ENCODE measurements at regions of chr5 and their contacts with region 1.

Region 1: GRCh38 chr5:73437101-73437776 is 11.3 kb downstream of the FOXD1 start:
- DNase-seq: peak; percentile 80
- ATAC-seq: peak; percentile 84
- H3K4me3 ChIP-seq: peak overlapping the region; percentile 68
- H3K27ac ChIP-seq: peak overlapping the region; percentile 72
- H3K4me1 ChIP-seq: peaks cover 16% of the 10 kb centered on the region; the same call in 1 of the 2 replicates
- H3K27me3 ChIP-seq: no peaks in the 10 kb centered on the region
- CTCF ChIP-seq: peak; percentile 72

Region 2: GRCh38 chr5:73215891-73216610 is 221.2 kb before region 1 on chr5:
- CTCF ChIA-PET with region 1: no interaction called
- POLR2A ChIA-PET with region 1: no interaction called
- intact Hi-C with region 1: loop called (anchors 5 kb)
- DNase-seq: peak; percentile 77
- ATAC-seq: peak; percentile 94
- H3K4me3 ChIP-seq: peak overlapping the region; percentile 68
- H3K27ac ChIP-seq: peak overlapping the region; percentile 68
- H3K4me1 ChIP-seq: no peaks in the 10 kb centered on the region
- H3K27me3 ChIP-seq: no peaks in the 10 kb centered on the region
- CTCF ChIP-seq: peak; percentile 70

Region 3: GRCh38 chr5:73298772-73299630 is 138.2 kb before region 1 on chr5:
- CTCF ChIA-PET with region 1: interaction called, 3 read pairs
- POLR2A ChIA-PET with region 1: no interaction called
- intact Hi-C with region 1: loop called (anchors 5 kb)
- DNase-seq: peak; percentile 52
- ATAC-seq: peak; percentile 88
- H3K4me3 ChIP-seq: peak overlapping the region; percentile 69
- H3K27ac ChIP-seq: no peak overlapping the region
- H3K4me1 ChIP-seq: peaks cover 12% of the 10 kb centered on the region
- H3K27me3 ChIP-seq: no peaks in the 10 kb centered on the region
- CTCF ChIP-seq: peak; percentile 44; the same call in 1 of the 2 replicates

Region 4: GRCh38 chr5:73338256-73339050 is 98.8 kb before region 1 on chr5:
- CTCF ChIA-PET with region 1: no interaction called
- POLR2A ChIA-PET with region 1: no interaction called
- intact Hi-C with region 1: loop called (anchors 10 kb)
- DNase-seq: peak; percentile 49
- ATAC-seq: peak; percentile 87
- H3K4me3 ChIP-seq: peak overlapping the region; percentile 59
- H3K27ac ChIP-seq: peak overlapping the region; percentile 65
- H3K4me1 ChIP-seq: peaks cover 20% of the 10 kb centered on the region
- H3K27me3 ChIP-seq: no peaks in the 10 kb centered on the region
- CTCF ChIP-seq: no peak

Region 5: DNA sequence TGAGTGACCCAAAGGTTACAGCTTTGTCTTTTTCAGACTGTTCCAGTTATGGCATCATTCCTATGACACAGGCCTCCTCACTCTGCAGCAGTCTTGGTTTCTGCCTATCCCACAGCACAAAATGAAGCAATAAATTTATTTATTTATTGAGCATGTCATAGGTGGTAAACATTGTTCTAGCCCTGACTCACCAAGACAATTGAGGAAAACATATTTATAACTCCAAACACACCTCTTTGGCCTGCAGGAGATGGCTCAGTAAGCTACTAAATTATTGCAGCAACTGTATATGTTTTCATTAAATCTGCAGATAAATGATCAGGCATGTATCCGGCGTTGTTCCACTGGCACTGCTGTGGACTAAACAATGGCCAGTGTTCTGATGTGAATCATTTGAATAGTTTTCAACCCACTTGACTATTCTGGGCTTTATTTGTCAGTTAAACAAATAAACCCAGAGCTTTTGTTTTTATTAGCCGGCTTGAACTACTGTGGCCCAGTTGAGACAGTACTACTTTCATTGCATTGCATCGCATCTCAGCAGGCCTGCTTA is 71.9 kb before region 1 on chr5:
- CTCF ChIA-PET with region 1: no interaction called
- POLR2A ChIA-PET with region 1: interaction called, 10 read pairs
- intact Hi-C with region 1: loop called (anchors 1 kb)
- DNase-seq: peak; percentile 88
- ATAC-seq: peak; percentile 86
- H3K4me3 ChIP-seq: no peak overlapping the region
- H3K27ac ChIP-seq: peak overlapping the region; percentile 96
- H3K4me1 ChIP-seq: peaks cover 41% of the 10 kb centered on the region
- H3K27me3 ChIP-seq: no peaks in the 10 kb centered on the region
- CTCF ChIP-seq: no peak

Region 6: GRCh38 chr5:73370640-73371583 is 66.3 kb before region 1 on chr5:
- CTCF ChIA-PET with region 1: no interaction called
- POLR2A ChIA-PET with region 1: no interaction called
- intact Hi-C with region 1: loop called (anchors 1 kb)
- DNase-seq: peak; percentile 95
- ATAC-seq: peak; percentile 86
- H3K4me3 ChIP-seq: peak overlapping the region; percentile 62
- H3K27ac ChIP-seq: peak overlapping the region; percentile 98
- H3K4me1 ChIP-seq: peaks cover 41% of the 10 kb centered on the region
- H3K27me3 ChIP-seq: no peaks in the 10 kb centered on the region
- CTCF ChIP-seq: no peak

Region 7: DNA sequence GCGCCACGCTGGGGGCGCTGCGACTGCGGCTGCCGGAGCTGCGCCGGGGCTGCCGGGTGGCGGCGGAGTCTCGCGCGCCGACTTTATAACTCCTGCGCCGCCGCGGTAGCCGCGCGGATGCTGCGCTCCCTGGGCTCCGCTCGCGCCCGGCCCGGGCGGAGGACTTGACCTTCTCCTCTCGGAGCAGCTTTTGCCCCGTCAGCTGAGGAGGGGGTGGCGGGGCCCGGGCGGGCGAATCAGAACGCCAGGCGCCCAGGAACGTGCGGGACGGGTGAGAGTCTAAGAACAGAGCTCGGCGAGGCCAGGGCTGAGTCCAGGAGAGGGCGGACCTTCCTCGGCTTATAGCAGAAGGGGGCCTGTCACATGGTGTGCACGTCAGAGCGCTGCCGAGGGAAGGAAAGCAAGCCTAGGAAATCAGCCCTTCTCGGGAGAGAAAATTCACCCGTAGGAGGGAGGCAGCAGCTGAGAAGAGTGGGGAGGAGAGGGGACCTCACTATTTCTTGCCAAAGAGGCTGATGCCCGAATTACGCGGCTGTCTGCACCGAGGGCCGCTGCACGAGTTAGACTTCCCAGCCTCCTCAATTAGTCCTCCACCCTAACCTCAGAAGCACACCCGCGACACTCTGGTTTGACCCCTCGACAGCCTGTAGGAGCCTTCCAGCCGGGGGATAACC is 11.4 kb after region 1 on chr5 and contains the start of gene FOXD1:
- CTCF ChIA-PET with region 1: no interaction called
- POLR2A ChIA-PET with region 1: no interaction called
- intact Hi-C with region 1: loop called (anchors 2 kb)
- DNase-seq: peak; percentile 83
- ATAC-seq: peak; percentile 83
- H3K4me3 ChIP-seq: peak within 1 kb of the TSS; percentile 78
- H3K27ac ChIP-seq: peak within 1 kb of the TSS; percentile 40
- H3K4me1 ChIP-seq: peaks cover 12% of the 10 kb centered on the region
- H3K27me3 ChIP-seq: no peaks in the 10 kb centered on the region
- CTCF ChIP-seq: no peak
- total RNA-seq, gene FOXD1: 10.3 and 12.8 TPM in 2 replicates

Region 8: DNA sequence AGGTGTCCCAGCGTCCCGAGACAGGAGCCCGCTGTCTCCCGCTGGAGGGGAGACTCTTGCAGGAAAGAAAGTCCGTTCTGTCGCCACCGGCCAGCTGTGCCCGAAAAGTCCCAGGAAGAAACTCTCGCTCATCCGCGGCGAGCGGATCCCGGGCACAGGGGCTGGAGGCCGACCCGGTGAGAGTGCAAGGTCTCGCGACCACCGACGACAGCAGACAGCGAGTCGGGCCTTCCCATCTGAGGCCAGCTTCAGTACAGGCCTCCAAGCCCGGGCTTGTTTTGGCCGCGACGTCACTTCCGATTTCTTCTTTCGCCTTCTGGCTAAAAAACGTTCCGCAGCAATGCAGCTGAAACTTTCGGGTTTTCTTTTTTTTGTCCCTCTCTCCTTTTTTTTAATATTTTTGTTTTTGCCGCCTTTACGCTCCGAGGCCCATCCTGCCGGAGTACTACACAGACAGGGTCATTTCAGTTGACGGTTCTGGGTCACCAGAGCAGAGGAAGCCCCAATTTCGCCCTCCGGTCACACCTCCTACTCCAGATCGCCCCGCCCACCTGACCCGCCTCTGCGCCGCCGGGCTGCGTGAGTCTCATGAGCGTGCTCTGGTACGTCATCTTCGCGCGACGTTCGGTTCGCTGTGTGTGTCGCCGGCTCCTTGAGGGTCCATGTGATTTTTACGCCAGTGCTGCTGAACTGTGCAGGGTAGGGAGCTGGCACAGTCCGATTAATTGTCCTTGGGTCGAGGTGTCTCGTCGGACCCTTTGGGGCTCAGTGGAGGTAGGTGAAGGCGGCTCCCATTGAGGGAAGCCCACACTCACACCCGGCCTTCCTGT is 128.1 kb after region 1 on chr5 and contains the starts of genes ANKRA2 and UTP15:
- CTCF ChIA-PET with region 1: no interaction called
- POLR2A ChIA-PET with region 1: no interaction called
- intact Hi-C with region 1: no loop called
- DNase-seq: peak; percentile 94
- ATAC-seq: peak; percentile 90
- H3K4me3 ChIP-seq: peak within 1 kb of the TSS; percentile 72
- H3K27ac ChIP-seq: peak within 1 kb of the TSS; percentile 8; the same call in 1 of the 2 replicates
- H3K4me1 ChIP-seq: peaks cover 8% of the 10 kb centered on the region; the same call in 1 of the 2 replicates
- H3K27me3 ChIP-seq: no peaks in the 10 kb centered on the region
- CTCF ChIP-seq: no peak
- total RNA-seq, gene ANKRA2: 3.2 and 4.4 TPM in 2 replicates
- total RNA-seq, gene UTP15: 20.9 and 27.6 TPM in 2 replicates

Measured in PC-3 (cell line).